Naive thymus-derived CD4-positive, alpha-beta T cell (primary cell): ENCODE measurements at regions of chr1 and their contacts with region 1.

Region 1: GRCh38 chr1:27772933-27773825 is at the start of gene STX12:
- DNase-seq: peak; percentile 97 to 100 (median 98)
- ATAC-seq: peak; percentile 96
- H3K4me3 ChIP-seq: peak within 1 kb of the TSS; percentile 97
- H3K4me3 Mint-ChIP-seq: peak within 1 kb of the TSS; percentile 84 to 97 (median 94)
- H3K27ac ChIP-seq: peak within 1 kb of the TSS; percentile 94
- H3K27ac Mint-ChIP-seq: peak within 1 kb of the TSS; percentile 90 to 99 (median 96)
- H3K4me1 ChIP-seq: peaks cover 10 to 13% of the 10 kb centered on the region in 2 donors
- H3K4me1 Mint-ChIP-seq: peaks cover 26 to 43% (median 37%) of the 10 kb centered on the region in 7 donors
- H3K27me3 ChIP-seq: no peaks in the 10 kb centered on the region
- H3K27me3 Mint-ChIP-seq: no peaks in the 10 kb centered on the region
- total RNA-seq, gene STX12: 23.9 to 38.7 (median 28.9) TPM

Region 2: DNA sequence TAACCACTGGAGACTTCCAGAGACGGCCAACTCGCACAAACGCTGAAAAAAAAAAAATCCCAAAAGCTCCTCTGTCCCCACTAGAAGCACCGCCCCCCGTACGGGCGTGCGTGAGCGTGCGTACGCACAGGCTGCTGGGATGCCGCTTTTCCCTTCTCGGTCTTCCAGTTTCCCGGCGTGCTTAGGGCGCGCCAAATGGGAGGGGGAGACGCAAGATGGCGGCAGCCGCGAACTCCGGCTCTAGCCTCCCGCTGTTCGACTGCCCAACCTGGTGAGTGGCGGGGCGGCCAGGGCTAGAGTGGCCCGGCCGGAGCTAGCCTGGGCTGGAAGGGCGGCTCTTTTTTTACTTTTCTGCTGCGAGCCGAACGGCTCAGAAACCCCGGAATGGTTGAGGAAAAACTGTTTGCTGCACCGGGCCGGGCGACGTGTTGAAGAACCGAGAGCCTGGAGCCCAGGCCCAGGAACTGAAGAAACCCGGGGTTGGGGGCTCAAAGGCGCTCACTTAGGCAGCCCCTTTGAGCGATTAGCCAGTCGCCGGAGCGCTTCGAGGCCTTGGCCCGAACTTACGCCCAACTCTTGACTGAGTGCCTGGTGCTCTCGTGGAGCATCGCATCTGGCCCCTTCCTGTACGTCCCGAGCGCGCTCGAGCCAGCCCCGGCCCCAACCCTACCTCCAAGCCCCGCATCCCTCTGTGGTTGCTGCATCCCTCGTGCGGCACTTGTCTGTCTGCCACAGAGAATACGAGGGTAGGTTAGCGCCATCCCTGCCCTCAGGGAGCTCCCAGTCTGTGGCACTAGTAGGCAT is 57.6 kb after region 1 on chr1 and contains the start of gene PPP1R8:
- CTCF ChIA-PET with region 1: interaction called, 3 read pairs
- POLR2A ChIA-PET with region 1: interaction called, 6 read pairs
- intact Hi-C with region 1: loop called (anchors 1 kb)
- DNase-seq: peak; percentile 57 to 89 (median 86)
- ATAC-seq: peak; percentile 100
- H3K4me3 ChIP-seq: peak within 1 kb of the TSS; percentile 71
- H3K4me3 Mint-ChIP-seq: peak within 1 kb of the TSS; percentile 90 to 96 (median 93)
- H3K27ac ChIP-seq: peak within 1 kb of the TSS; percentile 92
- H3K27ac Mint-ChIP-seq: peak within 1 kb of the TSS; percentile 86 to 96 (median 92)
- H3K4me1 ChIP-seq: peaks cover 16% of the 10 kb centered on the region in 2 donors
- H3K4me1 Mint-ChIP-seq: peaks cover 16 to 51% (median 38%) of the 10 kb centered on the region in 7 donors
- H3K27me3 ChIP-seq: no peaks in the 10 kb centered on the region
- H3K27me3 Mint-ChIP-seq: no peaks in the 10 kb centered on the region
- total RNA-seq, gene PPP1R8: 17.5 to 60.2 (median 39.5) TPM